ENCODE measurements at regions of chr20 and their contacts with region 1.

Region 1: GRCh38 chr20:34876162-34877001 is at the start of gene ACSS2:
- DNase-seq: peak; percentile 85 to 98
- ATAC-seq: peak; percentile 75 to 90
- H3K4me3 ChIP-seq: peak within 1 kb of the TSS; percentile 81
- H3K27ac ChIP-seq: peak within 1 kb of the TSS; percentile 75 to 87
- H3K4me1 ChIP-seq: peaks cover 26% of the 10 kb centered on the region
- CTCF ChIP-seq: no peak
- EP300 ChIP-seq: no peak
- POLR2A ChIP-seq: peak; percentile 64
- RAD21 ChIP-seq: peak in 1 of 2 experiments; percentile 30; a peak in 1 of 5 replicates
- polyA plus RNA-seq, gene ACSS2: 21.4 and 22.1 TPM in 2 replicates

Region 2: GRCh38 chr20:34736106-34736735 is 140.2 kb before region 1 on chr20:
- CTCF ChIA-PET with region 1: no interaction called
- POLR2A ChIA-PET with region 1: no interaction called
- DNase-seq: no peak
- ATAC-seq: no peak
- H3K4me3 ChIP-seq: no peak overlapping the region
- H3K27ac ChIP-seq: no peak overlapping the region
- H3K4me1 ChIP-seq: no peaks in the 10 kb centered on the region
- CTCF ChIP-seq: no peak
- EP300 ChIP-seq: no peak
- POLR2A ChIP-seq: no peak
- RAD21 ChIP-seq: no peak

Region 3: GRCh38 chr20:34861386-34862084 is 14.8 kb before region 1 on chr20:
- CTCF ChIA-PET with region 1: interaction called, 32 read pairs
- POLR2A ChIA-PET with region 1: no interaction called
- DNase-seq: no peak
- ATAC-seq: no peak
- H3K4me3 ChIP-seq: no peak overlapping the region
- H3K27ac ChIP-seq: no peak overlapping the region
- H3K4me1 ChIP-seq: no peaks in the 10 kb centered on the region
- CTCF ChIP-seq: no peak
- EP300 ChIP-seq: no peak
- POLR2A ChIP-seq: no peak
- RAD21 ChIP-seq: no peak

Region 4: GRCh38 chr20:34938502-34939163 is 62.3 kb after region 1 on chr20:
- CTCF ChIA-PET with region 1: interaction called, 56 read pairs
- POLR2A ChIA-PET with region 1: interaction called, 3 read pairs
- DNase-seq: no peak
- ATAC-seq: no peak
- H3K4me3 ChIP-seq: no peak overlapping the region
- H3K27ac ChIP-seq: no peak overlapping the region
- H3K4me1 ChIP-seq: no peaks in the 10 kb centered on the region
- CTCF ChIP-seq: no peak
- EP300 ChIP-seq: no peak
- POLR2A ChIP-seq: no peak
- RAD21 ChIP-seq: no peak

Region 5: GRCh38 chr20:34971561-34972278 is 95.3 kb after region 1 on chr20:
- CTCF ChIA-PET with region 1: interaction called, 19 read pairs
- POLR2A ChIA-PET with region 1: no interaction called
- DNase-seq: no peak
- ATAC-seq: no peak
- H3K4me3 ChIP-seq: no peak overlapping the region
- H3K27ac ChIP-seq: no peak overlapping the region
- H3K4me1 ChIP-seq: no peaks in the 10 kb centered on the region
- CTCF ChIP-seq: no peak
- EP300 ChIP-seq: no peak
- POLR2A ChIP-seq: no peak
- RAD21 ChIP-seq: no peak

Region 6: GRCh38 chr20:35049776-35050352 is 173.5 kb after region 1 on chr20:
- CTCF ChIA-PET with region 1: interaction called, 11 read pairs
- POLR2A ChIA-PET with region 1: no interaction called
- DNase-seq: peak in 1 of 2 experiments; percentile 46
- ATAC-seq: no peak
- H3K4me3 ChIP-seq: no peak overlapping the region
- H3K27ac ChIP-seq: no peak overlapping the region
- H3K4me1 ChIP-seq: peaks cover 29% of the 10 kb centered on the region
- CTCF ChIP-seq: no peak
- EP300 ChIP-seq: no peak
- POLR2A ChIP-seq: no peak
- RAD21 ChIP-seq: no peak